ENCODE measurements at regions of chr3 and their contacts with region 1.

Region 1: GRCh38 chr3:136075218-136075808 is 109.8 kb downstream of the PPP2R3A start:
- DNase-seq: peak; percentile 51
- ATAC-seq: peak; percentile 64; the same call in 1 of the 2 replicates
- H3K4me3 ChIP-seq: no peak overlapping the region
- H3K27ac ChIP-seq: no peak overlapping the region
- H3K4me1 ChIP-seq: peaks cover 7 to 13% of the 10 kb centered on the region in 2 experiments
- H3K27me3 ChIP-seq: no peaks in the 10 kb centered on the region
- CTCF ChIP-seq: peak; percentile 83 to 91 (median 87); a peak in 5 of 6 replicates
- POLR2A ChIP-seq: no peak
- RAD21 ChIP-seq: peak; percentile 97

Region 2: GRCh38 chr3:136390574-136390973 is 315.3 kb after region 1 on chr3:
- CTCF ChIA-PET with region 1: interaction called, 4 read pairs
- POLR2A ChIA-PET with region 1: no interaction called
- RAD21 ChIA-PET with region 1: no interaction called
- intact Hi-C with region 1: loop called (anchors 2 kb)
- DNase-seq: no peak
- ATAC-seq: no peak
- H3K4me3 ChIP-seq: no peak overlapping the region
- H3K27ac ChIP-seq: no peak overlapping the region
- H3K4me1 ChIP-seq: peaks cover 0 to 2% of the 10 kb centered on the region in 2 experiments; a peak in 1 of 4 replicates
- H3K27me3 ChIP-seq: no peaks in the 10 kb centered on the region
- CTCF ChIP-seq: no peak
- POLR2A ChIP-seq: no peak
- RAD21 ChIP-seq: no peak

Region 3: GRCh38 chr3:137032465-137033120 is 957.3 kb after region 1 on chr3:
- CTCF ChIA-PET with region 1: interaction called, 3 read pairs
- POLR2A ChIA-PET with region 1: no interaction called
- RAD21 ChIA-PET with region 1: no interaction called
- intact Hi-C with region 1: loop called (anchors 5 kb)
- DNase-seq: peak; percentile 68
- ATAC-seq: peak; percentile 90
- H3K4me3 ChIP-seq: peak overlapping the region; percentile 19 to 36; a peak in 3 of 4 replicates
- H3K27ac ChIP-seq: no peak overlapping the region
- H3K4me1 ChIP-seq: peaks cover 0 to 11% of the 10 kb centered on the region in 2 experiments; a peak in 2 of 4 replicates
- H3K27me3 ChIP-seq: no peaks in the 10 kb centered on the region
- CTCF ChIP-seq: peak; percentile 66 to 95 (median 87)
- POLR2A ChIP-seq: no peak
- RAD21 ChIP-seq: peak; percentile 84

Region 4: GRCh38 chr3:137792626-137793271 is 1717.4 kb after region 1 on chr3:
- CTCF ChIA-PET with region 1: no interaction called
- POLR2A ChIA-PET with region 1: no interaction called
- RAD21 ChIA-PET with region 1: no interaction called
- intact Hi-C with region 1: loop called (anchors 10 kb)
- DNase-seq: peak; percentile 34
- ATAC-seq: peak; percentile 80
- H3K4me3 ChIP-seq: no peak overlapping the region
- H3K27ac ChIP-seq: no peak overlapping the region
- H3K4me1 ChIP-seq: no peaks in the 10 kb centered on the region
- H3K27me3 ChIP-seq: peaks cover 19% of the 10 kb centered on the region; the same call in 1 of the 2 replicates
- CTCF ChIP-seq: peak; percentile 62 to 85 (median 74); a peak in 5 of 6 replicates
- POLR2A ChIP-seq: no peak
- RAD21 ChIP-seq: peak; percentile 74